ENCODE measurements at regions of chr14 and their contacts with region 1.

Region 1: GRCh38 chr14:61860294-61860918 is 98.2 kb downstream of the SNAPC1 start:
- DNase-seq: peak; percentile 53
- ATAC-seq: peak; percentile 100
- H3K4me3 Mint-ChIP-seq: no peak overlapping the region
- H3K27ac Mint-ChIP-seq: no peak overlapping the region
- H3K4me1 Mint-ChIP-seq: peaks cover 6% of the 10 kb centered on the region
- H3K27me3 Mint-ChIP-seq: peaks cover 4% of the 10 kb centered on the region
- CTCF ChIP-seq: peak; percentile 25

Region 2: GRCh38 chr14:61229475-61229888 is 630.9 kb before region 1 on chr14:
- CTCF ChIA-PET with region 1: no interaction called
- POLR2A ChIA-PET with region 1: no interaction called
- intact Hi-C with region 1: no loop called
- DNase-seq: no peak
- ATAC-seq: no peak
- H3K4me3 Mint-ChIP-seq: no peak overlapping the region
- H3K27ac Mint-ChIP-seq: no peak overlapping the region
- H3K4me1 Mint-ChIP-seq: no peaks in the 10 kb centered on the region
- H3K27me3 Mint-ChIP-seq: peaks cover 28% of the 10 kb centered on the region
- CTCF ChIP-seq: no peak

Region 3: GRCh38 chr14:61279082-61279481 is 581.3 kb before region 1 on chr14:
- CTCF ChIA-PET with region 1: no interaction called
- POLR2A ChIA-PET with region 1: no interaction called
- intact Hi-C with region 1: no loop called
- DNase-seq: no peak
- ATAC-seq: no peak
- H3K4me3 Mint-ChIP-seq: no peak overlapping the region
- H3K27ac Mint-ChIP-seq: no peak overlapping the region
- H3K4me1 Mint-ChIP-seq: peaks cover 13% of the 10 kb centered on the region
- H3K27me3 Mint-ChIP-seq: peaks cover 46% of the 10 kb centered on the region
- CTCF ChIP-seq: no peak

Region 4: GRCh38 chr14:61344437-61345150 is 515.8 kb before region 1 on chr14:
- CTCF ChIA-PET with region 1: no interaction called
- POLR2A ChIA-PET with region 1: no interaction called
- intact Hi-C with region 1: no loop called
- DNase-seq: no peak
- ATAC-seq: no peak
- H3K4me3 Mint-ChIP-seq: no peak overlapping the region
- H3K27ac Mint-ChIP-seq: no peak overlapping the region
- H3K4me1 Mint-ChIP-seq: peaks cover 27% of the 10 kb centered on the region
- H3K27me3 Mint-ChIP-seq: peaks cover 3% of the 10 kb centered on the region
- CTCF ChIP-seq: no peak

Region 5: DNA sequence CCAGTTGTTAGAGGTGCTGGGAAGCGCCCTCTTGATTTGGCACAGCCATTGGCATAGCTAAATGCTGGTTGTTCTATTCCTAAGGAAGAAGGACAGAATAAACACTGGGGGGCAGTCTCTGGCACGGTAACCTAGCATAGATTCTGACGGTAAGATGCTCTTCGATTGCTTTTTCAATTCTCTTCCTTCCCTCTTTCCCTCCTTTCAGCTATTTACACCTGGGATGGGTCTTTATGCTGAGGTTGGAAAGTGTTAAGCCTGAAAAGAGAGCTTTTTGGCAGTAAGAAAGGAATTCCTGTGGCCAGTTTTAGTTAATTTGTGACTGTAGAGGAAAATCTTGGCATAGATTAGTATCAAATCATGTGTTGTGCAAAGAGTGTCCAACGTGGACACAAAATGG is 64.6 kb after region 1 on chr14:
- CTCF ChIA-PET with region 1: interaction called, 7 read pairs
- POLR2A ChIA-PET with region 1: no interaction called
- intact Hi-C with region 1: loop called (anchors 1 kb)
- DNase-seq: no peak
- ATAC-seq: peak; percentile 70
- H3K4me3 Mint-ChIP-seq: peak overlapping the region; percentile 21
- H3K27ac Mint-ChIP-seq: no peak overlapping the region
- H3K4me1 Mint-ChIP-seq: peaks cover 20% of the 10 kb centered on the region
- H3K27me3 Mint-ChIP-seq: no peaks in the 10 kb centered on the region
- CTCF ChIP-seq: peak; percentile 45

Measured in activated B cell treated with CpG ODN at 0.5 μM for 24 hours (primary cell).